ENCODE measurements at regions of chr16 and their contacts with region 1.

Region 1: GRCh38 chr16:3029537-3030402 is 5.9 kb downstream of the THOC6 start:
- DNase-seq: no peak

Region 2: DNA sequence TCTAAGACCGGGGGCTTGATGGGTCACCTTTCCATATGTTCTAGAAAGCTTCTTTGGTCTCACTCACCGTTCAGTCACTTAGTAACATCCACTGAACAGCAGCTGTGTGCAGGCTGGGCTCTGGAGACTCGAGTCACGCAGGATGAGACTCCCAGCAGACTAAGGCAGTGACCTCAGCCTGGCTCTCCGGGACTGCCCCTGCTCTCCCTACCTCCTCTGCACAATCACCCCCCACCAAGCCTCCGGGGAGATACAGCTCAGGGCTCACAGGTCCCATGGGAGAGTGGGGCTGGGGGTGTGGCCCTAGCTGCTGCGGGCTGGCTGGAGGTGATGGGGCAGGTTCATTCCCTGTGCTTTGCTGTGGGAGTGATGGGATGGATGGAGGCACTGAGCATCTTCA is 132.7 kb before region 1 on chr16:
- CTCF ChIA-PET with region 1: no interaction called
- POLR2A ChIA-PET with region 1: no interaction called
- DNase-seq: no peak

Region 3: GRCh38 chr16:3003582-3004302 is 26.0 kb before region 1 on chr16:
- CTCF ChIA-PET with region 1: interaction called, 20 read pairs
- POLR2A ChIA-PET with region 1: interaction called, 6 read pairs
- DNase-seq: peak; percentile 99

Region 4: DNA sequence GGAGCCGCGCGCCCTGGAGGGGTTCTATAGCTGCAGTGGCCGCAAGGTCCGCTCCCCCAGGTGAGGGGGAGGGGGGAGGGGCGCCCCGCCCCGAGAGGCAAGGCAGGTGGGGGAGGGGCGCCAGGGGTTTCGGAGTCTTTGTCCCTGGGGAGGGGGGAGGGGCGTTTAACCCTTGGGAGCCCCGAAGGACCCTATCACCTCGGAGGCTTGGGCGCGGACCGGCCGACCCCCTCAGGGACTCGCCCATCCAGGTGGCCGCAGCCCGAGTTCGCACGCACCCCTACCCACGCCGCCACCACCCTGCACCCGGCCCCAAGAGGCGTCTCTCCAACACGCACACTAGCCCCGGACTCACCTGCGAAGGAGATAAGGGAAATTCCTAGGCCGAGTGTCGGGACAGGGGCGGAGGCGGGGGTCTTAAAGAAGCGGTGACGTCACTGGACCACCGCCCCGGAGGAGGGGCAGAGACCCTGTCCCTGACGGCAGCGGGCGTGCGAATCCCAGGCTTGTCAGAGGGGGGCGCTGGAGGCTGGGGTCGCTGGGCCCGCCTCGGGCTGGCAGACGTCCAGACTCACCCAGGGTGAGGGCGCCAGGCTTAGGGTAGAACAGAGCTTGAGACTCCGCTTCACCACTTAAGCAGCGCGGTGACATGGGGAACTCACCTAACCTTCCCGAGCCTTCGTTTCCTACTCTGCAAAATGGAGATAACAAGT is 11.8 kb before region 1 on chr16 and contains the start of gene CLDN6:
- CTCF ChIA-PET with region 1: interaction called, 38 read pairs
- POLR2A ChIA-PET with region 1: interaction called, 55 read pairs
- DNase-seq: peak; percentile 73

Region 5: GRCh38 chr16:3045357-3045728 is 15.6 kb after region 1 on chr16:
- CTCF ChIA-PET with region 1: interaction called, 19 read pairs
- POLR2A ChIA-PET with region 1: interaction called, 7 read pairs
- DNase-seq: peak; percentile 69

Region 6: DNA sequence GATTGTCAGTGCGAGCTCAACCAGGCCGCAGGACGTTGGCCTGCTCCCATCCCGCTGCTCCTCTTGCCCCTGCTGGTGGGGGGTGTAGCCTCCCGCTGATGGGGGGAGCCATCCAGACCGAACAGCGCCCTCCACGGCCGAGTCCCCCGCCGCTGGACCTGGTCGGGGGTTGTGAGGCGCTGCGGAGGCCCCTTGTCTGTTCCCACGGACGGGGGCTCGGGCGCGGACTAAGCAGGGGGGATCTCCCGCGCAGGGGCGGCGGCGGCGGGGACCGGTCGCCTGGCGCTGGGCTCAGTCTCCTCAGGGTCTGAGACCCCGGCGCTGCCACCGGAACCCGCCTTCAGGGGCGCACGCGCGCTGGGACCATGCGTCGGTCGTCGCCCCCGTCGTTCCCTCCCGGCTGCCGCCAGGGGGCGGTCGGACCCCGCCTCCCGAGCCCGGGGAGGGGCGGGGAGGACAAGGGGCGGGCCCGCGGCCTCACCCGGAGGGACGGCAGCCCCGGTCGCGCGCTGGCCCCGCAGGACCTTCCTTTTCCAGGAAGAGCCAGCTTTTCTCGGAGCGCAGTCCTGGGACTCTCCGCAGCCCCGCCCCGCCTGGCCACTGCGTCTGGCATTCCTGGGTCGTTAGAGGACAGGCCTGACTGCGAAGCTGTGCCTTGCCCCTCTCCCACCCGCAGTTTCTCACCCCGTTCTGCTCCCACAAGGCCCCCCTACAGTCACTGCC is 29.4 kb after region 1 on chr16:
- CTCF ChIA-PET with region 1: interaction called, 14 read pairs
- POLR2A ChIA-PET with region 1: interaction called, 12 read pairs
- DNase-seq: peak; percentile 95

Measured in HEK293T (cell line).